ENCODE measurements at regions of chr2 and their contacts with region 1.

Region 1: GRCh38 chr2:181305301-181306123 is 151.7 kb upstream of the ITGA4 start:
- DNase-seq: peak in 7 of 9 experiments; percentile 31 to 76 (median 54)
- ATAC-seq: peak; percentile 67
- H3K4me3 ChIP-seq: no peak overlapping the region
- H3K4me3 Mint-ChIP-seq: peak overlapping the region; percentile 71
- H3K27ac ChIP-seq: peak overlapping the region; percentile 79
- H3K27ac Mint-ChIP-seq: peak overlapping the region; percentile 96
- H3K4me1 ChIP-seq: peaks cover 78% of the 10 kb centered on the region
- H3K4me1 Mint-ChIP-seq: peaks cover 80% of the 10 kb centered on the region
- H3K27me3 ChIP-seq: no peaks in the 10 kb centered on the region
- H3K27me3 Mint-ChIP-seq: no peaks in the 10 kb centered on the region
- CTCF ChIP-seq: no peak

Region 2: GRCh38 chr2:181123798-181124231 is 181.7 kb before region 1 on chr2:
- CTCF ChIA-PET with region 1: interaction called, 3 read pairs
- POLR2A ChIA-PET with region 1: interaction called, 3 read pairs
- intact Hi-C with region 1: loop called (anchors 2 to 5 kb)
- DNase-seq: peak; percentile 25 to 94 (median 60)
- ATAC-seq: peak; percentile 93
- H3K4me3 ChIP-seq: peak overlapping the region; percentile 31 to 42
- H3K4me3 Mint-ChIP-seq: peak overlapping the region; percentile 81
- H3K27ac ChIP-seq: peak overlapping the region; percentile 84 to 96
- H3K27ac Mint-ChIP-seq: peak overlapping the region; percentile 99
- H3K4me1 ChIP-seq: peaks cover 66% of the 10 kb centered on the region
- H3K4me1 Mint-ChIP-seq: peaks cover 74% of the 10 kb centered on the region
- H3K27me3 ChIP-seq: no peaks in the 10 kb centered on the region
- H3K27me3 Mint-ChIP-seq: no peaks in the 10 kb centered on the region
- CTCF ChIP-seq: no peak

Region 3: DNA sequence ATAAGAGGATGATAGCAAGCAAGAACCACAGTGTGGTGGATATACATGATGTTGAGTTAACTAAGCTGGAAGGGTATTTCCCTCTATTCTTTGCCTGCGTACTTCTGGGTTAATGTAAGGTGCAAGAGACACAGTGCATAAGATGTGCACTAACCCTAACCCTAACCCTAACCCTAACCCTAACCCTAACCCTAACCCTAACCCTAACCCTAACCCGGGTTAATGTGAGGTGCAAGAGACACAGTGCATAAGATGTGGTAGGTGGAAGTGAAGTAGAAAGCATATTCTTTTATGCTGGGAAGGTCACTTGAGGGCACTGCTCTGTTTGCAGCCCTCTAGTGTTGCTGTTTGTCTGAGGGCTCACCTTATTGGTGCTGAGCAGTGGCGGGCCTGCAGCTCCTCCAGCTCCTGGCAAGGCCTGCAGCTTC is 29.9 kb before region 1 on chr2:
- CTCF ChIA-PET with region 1: interaction called, 10 read pairs
- POLR2A ChIA-PET with region 1: interaction called, 3 read pairs
- intact Hi-C with region 1: loop called (anchors 2 to 5 kb)
- DNase-seq: peak in 5 of 9 experiments; percentile 18 to 78 (median 59)
- ATAC-seq: peak; percentile 90
- H3K4me3 ChIP-seq: no peak overlapping the region
- H3K4me3 Mint-ChIP-seq: peak overlapping the region; percentile 35
- H3K27ac ChIP-seq: peak overlapping the region; percentile 17 to 68
- H3K27ac Mint-ChIP-seq: peak overlapping the region; percentile 79
- H3K4me1 ChIP-seq: peaks cover 31% of the 10 kb centered on the region
- H3K4me1 Mint-ChIP-seq: peaks cover 46% of the 10 kb centered on the region
- H3K27me3 ChIP-seq: no peaks in the 10 kb centered on the region
- H3K27me3 Mint-ChIP-seq: no peaks in the 10 kb centered on the region
- CTCF ChIP-seq: no peak

Region 4: GRCh38 chr2:181281206-181281832 is 24.2 kb before region 1 on chr2:
- CTCF ChIA-PET with region 1: interaction called, 10 read pairs
- POLR2A ChIA-PET with region 1: interaction called, 3 read pairs
- intact Hi-C with region 1: loop called (anchors 2 to 5 kb)
- DNase-seq: peak in 2 of 9 experiments; percentile 67 to 83
- ATAC-seq: peak; percentile 89
- H3K4me3 ChIP-seq: no peak overlapping the region
- H3K4me3 Mint-ChIP-seq: peak overlapping the region; percentile 6
- H3K27ac ChIP-seq: peak overlapping the region in 1 of 2 experiments; percentile 39
- H3K27ac Mint-ChIP-seq: peak overlapping the region; percentile 86
- H3K4me1 ChIP-seq: peaks cover 29% of the 10 kb centered on the region
- H3K4me1 Mint-ChIP-seq: peaks cover 54% of the 10 kb centered on the region
- H3K27me3 ChIP-seq: no peaks in the 10 kb centered on the region
- H3K27me3 Mint-ChIP-seq: no peaks in the 10 kb centered on the region
- CTCF ChIP-seq: no peak

Region 5: DNA sequence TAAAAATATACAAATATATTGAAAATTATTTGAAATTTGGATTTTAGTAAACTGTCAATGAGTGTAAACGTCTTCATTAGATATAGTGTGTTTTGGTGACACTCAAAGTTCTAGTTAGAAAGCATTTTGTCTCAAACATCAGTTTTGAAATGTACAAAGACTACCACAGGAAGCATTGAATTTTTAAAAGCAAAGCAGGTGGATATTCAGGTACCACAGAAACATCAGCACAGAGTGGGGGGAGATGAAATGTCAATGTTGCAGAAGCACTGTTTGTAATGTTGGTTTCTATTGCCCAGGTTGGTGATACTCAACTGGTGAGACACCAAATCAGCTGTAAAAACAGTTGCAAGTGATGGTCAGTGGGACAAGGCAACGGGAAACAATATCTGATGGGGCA is 15.1 kb after region 1 on chr2:
- CTCF ChIA-PET with region 1: interaction called, 6 read pairs
- POLR2A ChIA-PET with region 1: interaction called, 4 read pairs
- intact Hi-C with region 1: loop called in 1 of 2 experiments (anchors 2 kb)
- DNase-seq: no peak
- ATAC-seq: peak; percentile 31
- H3K4me3 ChIP-seq: no peak overlapping the region
- H3K4me3 Mint-ChIP-seq: no peak overlapping the region
- H3K27ac ChIP-seq: no peak overlapping the region
- H3K27ac Mint-ChIP-seq: peak overlapping the region; percentile 1
- H3K4me1 ChIP-seq: no peaks in the 10 kb centered on the region
- H3K4me1 Mint-ChIP-seq: peaks cover 24% of the 10 kb centered on the region
- H3K27me3 ChIP-seq: no peaks in the 10 kb centered on the region
- H3K27me3 Mint-ChIP-seq: no peaks in the 10 kb centered on the region
- CTCF ChIP-seq: no peak

Measured in CD8-positive, alpha-beta T cell (primary cell).